Posterior vena cava (tissue), 2 donors: ENCODE measurements at regions of chr15 and their contacts with region 1.

Region 1: GRCh38 chr15:42286445-42287029 is 13.3 kb upstream of the TMEM87A start:
- DNase-seq: no peak

Region 2: GRCh38 chr15:41727143-41727542 is 559.4 kb before region 1 on chr15:
- intact Hi-C with region 1: loop called in 1 of 2 experiments (anchors 5 kb)
- DNase-seq: no peak

Region 3: DNA sequence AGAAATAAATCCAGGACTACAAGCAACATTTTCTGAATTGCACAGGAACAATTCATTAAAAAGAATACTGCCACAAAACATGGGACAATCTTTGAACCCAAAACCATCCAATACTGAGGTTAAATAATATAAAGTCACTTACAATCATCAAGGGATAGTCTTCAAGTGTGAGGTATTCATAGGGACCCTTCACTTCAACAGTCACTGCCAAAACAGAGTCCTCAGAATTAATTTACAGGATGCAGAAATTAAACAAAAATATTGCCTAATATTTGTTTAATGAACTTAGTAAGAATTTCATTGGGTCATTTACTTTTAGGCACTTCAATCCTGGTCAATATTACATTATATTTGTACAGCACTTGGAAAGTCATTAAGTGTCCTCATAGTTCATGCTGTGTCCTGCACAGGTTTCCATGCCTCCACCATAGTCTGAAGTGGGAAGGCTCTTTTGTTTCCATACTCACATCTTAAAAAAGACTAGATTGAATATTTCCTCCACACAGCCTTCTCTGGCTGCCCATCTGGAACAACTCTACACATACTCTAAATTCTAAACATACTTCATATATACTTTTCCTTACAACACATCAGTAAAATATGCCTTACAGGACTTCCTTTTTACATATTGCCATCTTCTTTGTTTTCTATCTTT is 46.9 kb before region 1 on chr15:
- intact Hi-C with region 1: no loop called
- DNase-seq: no peak

Region 4: DNA sequence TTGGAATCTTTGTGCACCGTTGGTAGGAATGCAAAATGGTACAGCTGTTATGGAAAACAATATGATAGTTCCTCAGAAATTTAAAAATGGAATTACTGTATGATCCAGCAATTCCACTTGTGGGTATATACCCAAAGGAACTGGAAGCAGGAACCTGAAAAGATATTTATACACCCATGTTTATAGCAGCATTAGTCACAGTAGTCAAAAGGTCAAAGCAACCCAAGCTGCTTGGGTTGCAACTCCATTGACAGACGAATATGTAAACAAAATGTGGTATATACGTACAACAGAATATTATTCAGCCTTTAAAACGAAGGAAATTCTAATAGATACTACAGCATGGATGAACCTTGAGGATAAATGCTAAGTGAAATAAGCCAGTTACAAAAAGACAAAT is 37.8 kb after region 1 on chr15:
- intact Hi-C with region 1: loop called in 1 of 2 experiments (anchors 1 kb)
- DNase-seq: no peak

Region 5: GRCh38 chr15:42371125-42371524 is 84.6 kb after region 1 on chr15:
- intact Hi-C with region 1: no loop called
- DNase-seq: no peak

Region 6: GRCh38 chr15:42528970-42529369 is 242.4 kb after region 1 on chr15:
- intact Hi-C with region 1: no loop called
- DNase-seq: no peak